ENCODE measurements at regions of chr17 and their contacts with region 1.

Region 1: DNA sequence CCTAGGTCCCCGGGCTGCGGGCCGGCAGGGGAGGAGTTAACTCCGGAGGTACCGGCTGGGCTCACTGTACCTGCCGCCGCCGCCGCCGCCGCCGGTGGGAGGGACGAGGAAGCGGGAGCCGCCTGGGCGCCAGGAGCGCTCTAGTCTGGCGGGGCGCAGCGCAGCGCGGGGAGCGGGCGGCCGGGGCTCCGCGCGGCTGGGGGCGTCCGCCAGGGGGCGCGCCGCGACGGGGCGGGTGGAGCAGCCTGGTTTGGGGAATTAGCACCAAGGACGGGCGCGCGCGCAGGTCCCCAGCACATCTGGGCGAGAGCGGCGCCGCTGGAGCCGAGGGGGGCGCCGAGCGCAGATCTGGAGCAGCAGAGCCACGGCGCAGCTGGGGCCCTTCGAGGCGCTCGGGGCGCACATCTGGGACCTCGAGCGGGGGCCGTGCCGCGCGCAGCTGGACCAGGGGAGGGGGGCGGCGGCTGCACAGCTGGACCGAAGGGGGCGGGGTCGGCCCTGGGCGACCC is at the start of gene NXPH3:
- DNase-seq: peak; percentile 85 to 93
- ATAC-seq: peak; percentile 72
- H3K4me3 ChIP-seq: peak within 1 kb of the TSS; percentile 76 to 92
- H3K27ac ChIP-seq: peak within 1 kb of the TSS; percentile 62 to 92
- H3K4me1 ChIP-seq: no peaks in the 10 kb centered on the region
- H3K27me3 ChIP-seq: no peaks in the 10 kb centered on the region
- total RNA-seq, gene NXPH3: 72.0 to 87.5 TPM

Region 2: DNA sequence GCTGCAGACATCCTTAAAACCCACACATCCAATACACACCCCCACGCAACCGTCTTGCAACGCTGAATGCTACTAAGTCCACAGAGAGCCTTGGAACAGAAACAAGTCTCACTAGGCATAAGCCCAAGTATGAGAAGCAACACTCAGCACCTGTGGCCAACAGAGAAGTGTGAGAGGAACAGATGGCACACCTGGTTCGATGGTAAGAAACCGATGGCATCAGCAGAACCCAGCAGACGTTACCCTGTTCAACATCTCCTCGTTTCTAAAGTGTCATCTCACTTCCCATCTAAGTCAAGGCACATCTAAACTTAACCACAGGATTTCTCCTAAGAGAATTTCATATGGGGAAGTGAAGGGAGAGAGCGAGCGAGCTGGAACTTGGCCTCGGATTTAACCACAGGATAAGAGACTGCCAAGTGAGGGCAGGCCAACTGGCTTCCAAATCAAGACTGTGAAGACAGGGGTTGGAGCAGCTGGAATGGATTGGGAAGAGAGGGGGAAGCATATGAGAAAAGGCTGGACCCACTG is 41.0 kb after region 1 on chr17:
- intact Hi-C with region 1: loop called (anchors 5 kb)
- DNase-seq: peak; percentile 82 to 86
- ATAC-seq: peak; percentile 84
- H3K4me3 ChIP-seq: no peak overlapping the region
- H3K27ac ChIP-seq: peak overlapping the region; percentile 39 to 95
- H3K4me1 ChIP-seq: peaks cover 5 to 6% of the 10 kb centered on the region in 2 donors
- H3K27me3 ChIP-seq: no peaks in the 10 kb centered on the region

Region 3: DNA sequence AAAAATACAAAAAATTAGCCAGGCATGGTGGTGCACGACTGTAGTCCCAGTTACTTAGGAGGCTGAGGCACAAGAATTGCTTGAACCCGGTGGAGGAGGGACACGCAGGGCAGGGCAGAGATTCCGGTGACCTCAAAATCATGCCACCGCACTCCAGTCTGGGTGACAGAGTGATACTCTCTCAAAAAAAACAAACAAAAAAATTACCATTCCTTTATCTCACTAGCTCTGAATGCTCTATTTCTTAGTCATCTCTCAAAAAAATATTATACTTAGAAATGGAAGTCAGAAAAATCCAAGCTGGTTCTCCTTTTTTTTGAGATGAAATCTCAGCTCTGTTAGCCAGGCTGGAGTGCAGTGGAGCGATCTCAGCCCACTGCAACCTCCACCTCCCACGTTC is 61.4 kb after region 1 on chr17:
- intact Hi-C with region 1: loop called (anchors 5 kb)
- DNase-seq: no peak
- ATAC-seq: peak; percentile 64
- H3K4me3 ChIP-seq: no peak overlapping the region
- H3K27ac ChIP-seq: peak overlapping the region; percentile 61 to 99
- H3K4me1 ChIP-seq: peaks cover 8 to 18% of the 10 kb centered on the region in 2 donors
- H3K27me3 ChIP-seq: no peaks in the 10 kb centered on the region

Region 4: DNA sequence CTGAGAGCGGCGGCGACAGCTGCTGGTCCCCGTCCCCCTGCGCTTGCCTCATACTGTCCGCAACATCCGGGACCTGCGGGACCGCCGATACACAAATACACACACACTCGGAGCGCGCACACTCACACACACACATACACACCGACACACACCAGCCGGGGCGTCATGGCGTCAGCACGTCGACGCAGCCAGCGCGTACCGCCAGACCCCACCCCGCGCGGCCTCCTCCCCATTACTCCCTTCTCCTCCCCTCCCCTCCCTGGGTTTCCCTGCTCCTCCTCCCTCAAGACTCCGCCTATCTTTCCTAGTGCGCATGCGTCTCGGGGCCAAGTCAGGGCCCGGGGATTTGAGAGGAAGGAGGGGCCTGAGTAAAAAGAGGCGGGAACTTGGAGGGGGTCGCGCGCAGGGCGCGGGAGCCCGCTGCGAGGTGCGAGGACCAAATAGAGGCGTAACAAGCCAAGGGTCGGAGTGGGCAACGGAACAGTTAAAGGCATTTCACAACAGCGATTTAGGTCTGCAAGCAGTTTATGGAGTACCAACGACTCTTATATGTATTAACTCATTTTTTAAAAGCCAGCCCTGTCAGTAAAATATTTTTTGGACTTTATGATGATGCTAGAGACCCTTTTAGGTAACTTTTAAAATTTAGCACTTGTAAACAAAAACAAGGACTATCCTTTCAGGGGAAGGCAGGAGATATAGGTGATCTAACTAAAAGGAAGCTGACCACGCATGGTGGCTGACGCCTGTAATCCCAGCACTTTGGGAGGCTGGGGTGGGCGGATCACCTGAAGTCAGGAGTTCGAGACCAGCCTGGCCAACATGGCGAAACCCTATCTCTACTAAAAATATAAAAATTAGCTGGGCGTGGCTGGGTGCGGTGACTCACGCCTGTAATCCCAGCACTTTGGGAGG is 102.6 kb after region 1 on chr17 and contains the start of gene SPOP:
- intact Hi-C with region 1: loop called in 1 of 2 experiments (anchors 5 kb)
- DNase-seq: peak; percentile 100
- ATAC-seq: peak; percentile 100
- H3K4me3 ChIP-seq: peak within 1 kb of the TSS; percentile 67 to 90
- H3K27ac ChIP-seq: peak within 1 kb of the TSS; percentile 23 to 95
- H3K4me1 ChIP-seq: peaks cover 0 to 3% of the 10 kb centered on the region in 2 donors
- H3K27me3 ChIP-seq: no peaks in the 10 kb centered on the region
- total RNA-seq, gene SPOP: 117 to 289 TPM